HEK293 (cell line): ENCODE measurements at regions of chr7 and their contacts with region 1.

Region 1: GRCh38 chr7:99364961-99365817 is 9.3 kb upstream of the ARPC1B start:
- H3K4me3 ChIP-seq: no peak overlapping the region
- H3K27ac ChIP-seq: no peak overlapping the region
- H3K4me1 ChIP-seq: no peaks in the 10 kb centered on the region
- CTCF ChIP-seq: 0 out of 2 replicates have a peak, but pooled peaks have one; percentile 47

Region 2: DNA sequence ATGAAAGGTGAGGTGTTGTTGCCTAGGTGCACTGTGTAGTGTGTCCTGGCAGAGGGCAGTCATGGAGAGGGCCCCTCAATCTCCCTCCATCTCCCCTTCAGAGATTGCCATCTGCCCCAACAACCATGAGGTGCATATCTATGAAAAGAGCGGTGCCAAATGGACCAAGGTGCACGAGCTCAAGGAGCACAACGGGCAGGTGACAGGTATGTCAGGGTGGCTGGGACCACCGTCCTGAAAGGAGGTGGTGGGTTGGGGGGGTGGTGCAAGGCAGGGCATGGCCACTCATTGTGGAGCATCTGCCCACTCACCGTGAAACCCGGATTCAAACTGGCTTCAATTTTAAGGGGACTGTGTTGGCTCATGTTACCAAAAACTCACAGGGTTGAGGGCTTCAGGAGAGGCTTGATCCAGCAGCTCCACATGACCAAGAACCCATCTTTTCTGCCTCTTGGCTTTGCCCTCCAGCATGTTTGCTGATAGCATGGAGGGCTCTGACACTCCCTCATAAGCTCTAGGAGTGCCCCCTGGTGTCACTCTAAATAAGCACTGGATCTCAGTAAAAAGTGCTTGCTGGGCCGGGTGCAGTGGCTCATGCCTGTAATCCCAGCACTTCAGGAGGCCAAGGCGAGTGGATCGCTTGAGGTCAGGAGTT is 21.5 kb after region 1 on chr7:
- CTCF ChIA-PET with region 1: interaction called, 10 read pairs
- POLR2A ChIA-PET with region 1: no interaction called
- H3K4me3 ChIP-seq: no peak overlapping the region
- H3K27ac ChIP-seq: no peak overlapping the region
- H3K4me1 ChIP-seq: no peaks in the 10 kb centered on the region
- CTCF ChIP-seq: peak; percentile 65; the same call in 1 of the 2 replicates

Region 3: GRCh38 chr7:99437946-99438572 is 72.9 kb after region 1 on chr7:
- CTCF ChIA-PET with region 1: no interaction called
- POLR2A ChIA-PET with region 1: no interaction called
- H3K4me3 ChIP-seq: peak overlapping the region; percentile 91
- H3K27ac ChIP-seq: peak overlapping the region; percentile 91; the same call in 1 of the 2 replicates
- H3K4me1 ChIP-seq: peaks cover 9% of the 10 kb centered on the region
- CTCF ChIP-seq: no peak